CD4-positive, alpha-beta T cell (primary cell): ENCODE measurements at regions of chr7 and their contacts with region 1.

Region 1: DNA sequence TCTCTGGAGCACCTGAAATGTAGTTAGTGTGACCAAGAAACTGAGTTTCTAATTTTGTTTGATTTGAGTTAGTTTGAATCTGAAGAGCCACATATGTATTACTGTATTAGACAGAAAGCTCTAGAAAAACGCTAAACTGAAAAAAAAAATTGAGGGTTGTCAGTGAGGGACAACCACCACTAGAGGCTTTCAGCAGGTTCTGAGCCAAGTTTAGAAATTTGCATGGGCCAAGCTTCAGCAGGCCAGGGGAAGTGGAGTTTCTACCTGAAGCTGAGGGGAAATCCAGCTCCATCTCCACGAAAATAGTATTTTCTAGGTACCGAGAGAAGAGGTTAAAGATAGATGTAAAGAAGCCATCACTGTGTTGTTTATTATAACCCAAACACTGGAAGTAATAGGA is 77.9 kb upstream of the PLXNA4 start:
- DNase-seq: peak in 3 of 14 experiments; percentile 27 to 35 (median 34)
- ATAC-seq: peak; percentile 33
- H3K4me3 ChIP-seq: no peak overlapping the region
- H3K4me3 Mint-ChIP-seq: peak overlapping the region; percentile 82
- H3K27ac ChIP-seq: no peak overlapping the region
- H3K27ac Mint-ChIP-seq: peak overlapping the region; percentile 16
- H3K4me1 ChIP-seq: peaks cover 21% of the 10 kb centered on the region
- H3K4me1 Mint-ChIP-seq: peaks cover 43% of the 10 kb centered on the region
- H3K27me3 ChIP-seq: no peaks in the 10 kb centered on the region
- H3K27me3 Mint-ChIP-seq: no peaks in the 10 kb centered on the region
- CTCF ChIP-seq: peak; percentile 9

Region 2: DNA sequence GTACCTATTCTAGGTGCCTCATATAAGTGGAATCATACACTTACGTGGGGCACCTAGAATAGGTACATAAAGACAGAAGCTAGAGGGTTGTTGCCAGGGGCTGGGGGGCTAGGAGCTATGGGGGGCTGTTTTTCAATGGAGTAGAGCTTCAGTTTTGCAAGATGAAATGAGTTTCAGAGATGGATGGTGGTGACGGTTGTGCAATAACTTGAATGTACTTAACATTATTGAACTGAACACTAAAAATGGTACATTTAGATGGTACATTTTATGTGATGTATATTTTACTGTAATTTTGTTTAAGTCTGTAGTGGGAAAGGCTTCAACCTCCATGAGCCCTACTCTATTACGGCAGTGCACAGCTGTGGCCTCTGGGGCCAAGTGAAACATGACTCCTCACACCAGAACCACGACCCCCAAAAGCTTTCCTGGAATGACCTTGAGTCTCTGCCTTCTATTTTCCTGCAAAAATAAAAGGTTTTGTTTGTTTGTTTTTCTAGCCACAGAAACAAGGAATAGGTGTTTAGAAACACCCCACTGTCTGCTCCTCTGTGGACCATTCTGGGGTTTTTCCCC is 69.4 kb after region 1 on chr7:
- CTCF ChIA-PET with region 1: no interaction called
- POLR2A ChIA-PET with region 1: no interaction called
- intact Hi-C with region 1: no loop called
- DNase-seq: no peak
- ATAC-seq: no peak
- H3K4me3 ChIP-seq: no peak overlapping the region
- H3K4me3 Mint-ChIP-seq: no peak overlapping the region
- H3K27ac ChIP-seq: no peak overlapping the region
- H3K27ac Mint-ChIP-seq: no peak overlapping the region
- H3K4me1 ChIP-seq: no peaks in the 10 kb centered on the region
- H3K4me1 Mint-ChIP-seq: no peaks in the 10 kb centered on the region
- H3K27me3 ChIP-seq: no peaks in the 10 kb centered on the region
- H3K27me3 Mint-ChIP-seq: peaks cover 8% of the 10 kb centered on the region
- CTCF ChIP-seq: no peak

Region 3: DNA sequence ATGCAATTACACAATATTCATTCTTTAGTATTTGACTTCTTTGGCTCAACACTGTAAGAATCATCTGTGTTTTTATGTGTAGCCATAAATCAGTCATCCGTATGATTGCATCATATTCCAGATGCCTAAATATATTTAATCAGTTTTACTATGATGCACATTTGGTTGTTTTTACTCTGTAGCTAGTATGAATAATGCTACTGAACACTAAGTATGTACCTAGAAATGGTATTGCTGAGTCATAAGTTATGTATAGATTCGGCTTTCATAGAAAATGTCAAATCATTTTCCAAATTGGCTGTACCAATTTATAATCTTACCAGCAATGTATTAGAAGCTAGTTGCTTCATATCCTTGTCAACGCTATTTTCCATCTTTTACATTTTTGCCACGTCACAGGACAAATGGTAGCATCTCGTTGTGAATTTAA is 119.4 kb after region 1 on chr7:
- CTCF ChIA-PET with region 1: no interaction called
- POLR2A ChIA-PET with region 1: no interaction called
- intact Hi-C with region 1: loop called (anchors 5 to 10 kb)
- DNase-seq: no peak
- ATAC-seq: no peak
- H3K4me3 ChIP-seq: no peak overlapping the region
- H3K4me3 Mint-ChIP-seq: no peak overlapping the region
- H3K27ac ChIP-seq: no peak overlapping the region
- H3K27ac Mint-ChIP-seq: no peak overlapping the region
- H3K4me1 ChIP-seq: peaks cover 27% of the 10 kb centered on the region
- H3K4me1 Mint-ChIP-seq: peaks cover 44% of the 10 kb centered on the region
- H3K27me3 ChIP-seq: no peaks in the 10 kb centered on the region
- H3K27me3 Mint-ChIP-seq: no peaks in the 10 kb centered on the region
- CTCF ChIP-seq: no peak